BJ (cell line): ENCODE measurements at regions of chr16 and their contacts with region 1.

Region 1: GRCh38 chr16:54266363-54266955 is 20.1 kb downstream of the IRX3 start:
- DNase-seq: no peak
- H3K4me3 ChIP-seq: no peak overlapping the region
- H3K27me3 ChIP-seq: no peaks in the 10 kb centered on the region; the same call in 1 of the 2 replicates
- CTCF ChIP-seq: no peak

Region 2: DNA sequence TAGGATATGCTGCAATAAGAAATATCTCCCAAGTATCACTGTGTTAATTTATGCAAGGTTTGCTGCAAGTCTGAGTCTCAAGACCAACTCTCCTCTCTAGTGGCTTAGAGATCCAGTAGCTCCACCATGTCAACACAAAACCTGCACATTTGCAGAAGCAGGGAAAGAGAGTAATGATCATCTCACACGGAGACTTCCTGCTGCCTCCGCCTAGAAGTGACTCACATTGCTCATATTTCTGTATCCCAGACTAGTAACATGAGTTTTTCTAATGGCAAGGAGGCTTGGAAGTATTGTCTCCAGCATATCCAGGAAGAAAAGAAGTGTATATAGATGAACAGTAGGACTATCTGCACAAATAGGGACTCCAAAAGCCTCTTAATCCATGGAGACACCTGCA is 1042.5 kb after region 1 on chr16:
- CTCF ChIA-PET with region 1: no interaction called
- POLR2A ChIA-PET with region 1: interaction called, 10 read pairs
- DNase-seq: no peak
- H3K4me3 ChIP-seq: no peak overlapping the region
- H3K27me3 ChIP-seq: no peaks in the 10 kb centered on the region
- CTCF ChIP-seq: no peak